MCF 10A (cell line): ENCODE measurements at regions of chr15 and their contacts with region 1.

Region 1: DNA sequence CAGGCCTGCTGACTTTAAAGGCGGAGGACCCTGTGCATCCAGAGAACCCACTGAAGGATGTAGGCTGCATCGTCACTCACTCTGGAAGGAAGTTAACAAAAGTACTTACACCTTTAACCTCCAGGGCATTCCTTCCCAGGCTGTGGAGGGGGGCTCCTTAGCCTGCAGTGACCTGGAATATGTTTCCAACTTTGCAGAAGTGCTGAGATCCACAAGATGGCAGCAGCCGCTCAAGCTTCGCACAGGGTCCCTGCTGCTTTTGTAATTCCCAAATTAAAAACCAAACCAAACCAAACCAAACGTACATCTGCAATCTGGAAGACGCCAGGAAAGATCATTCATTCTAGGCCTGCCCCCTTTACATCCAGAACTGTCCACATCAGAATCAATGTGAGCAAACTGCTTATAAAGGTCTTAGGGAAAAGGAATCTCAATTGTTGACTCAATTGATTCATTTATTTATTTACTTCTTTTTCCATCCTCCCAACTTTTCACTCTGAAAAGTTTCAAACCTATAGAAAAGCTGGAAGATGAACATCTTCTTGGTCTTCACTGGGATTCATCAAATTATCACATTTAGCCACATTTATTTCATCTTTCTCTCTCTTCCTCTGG is 70.5 kb upstream of the KLHL25 start:
- DNase-seq: peak; percentile 46
- H3K4me3 Mint-ChIP-seq: no peak overlapping the region
- H3K27ac Mint-ChIP-seq: no peak overlapping the region
- H3K4me1 Mint-ChIP-seq: no peaks in the 10 kb centered on the region
- H3K27me3 Mint-ChIP-seq: peaks cover 41% of the 10 kb centered on the region
- CTCF ChIP-seq: peak; percentile 81

Region 2: GRCh38 chr15:85515212-85515611 is 350.0 kb before region 1 on chr15:
- CTCF ChIA-PET with region 1: no interaction called
- POLR2A ChIA-PET with region 1: no interaction called
- intact Hi-C with region 1: no loop called
- DNase-seq: no peak
- H3K4me3 Mint-ChIP-seq: no peak overlapping the region
- H3K27ac Mint-ChIP-seq: no peak overlapping the region
- H3K4me1 Mint-ChIP-seq: peaks cover 28% of the 10 kb centered on the region
- H3K27me3 Mint-ChIP-seq: no peaks in the 10 kb centered on the region
- CTCF ChIP-seq: no peak

Region 3: DNA sequence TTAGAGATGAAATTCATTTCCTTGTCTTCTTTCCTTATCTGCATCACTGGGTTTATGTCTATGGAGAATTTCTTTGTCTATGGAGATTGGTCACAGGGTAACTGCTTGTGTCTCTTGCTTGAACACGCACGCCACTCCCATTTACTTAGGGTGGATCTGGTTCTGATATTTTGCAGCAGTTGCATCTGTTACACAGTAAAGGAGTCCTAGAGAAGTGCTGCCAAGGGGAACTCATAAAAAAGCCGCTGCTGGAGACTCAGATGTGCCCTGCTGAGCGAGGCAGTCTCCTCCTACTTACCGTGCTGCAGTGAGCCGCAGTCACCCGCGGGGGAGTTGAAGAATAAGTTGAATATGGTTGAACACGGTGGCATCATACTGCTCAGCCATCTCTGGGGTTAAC is 34.8 kb after region 1 on chr15:
- CTCF ChIA-PET with region 1: no interaction called
- POLR2A ChIA-PET with region 1: no interaction called
- intact Hi-C with region 1: no loop called
- DNase-seq: no peak
- H3K4me3 Mint-ChIP-seq: no peak overlapping the region
- H3K27ac Mint-ChIP-seq: no peak overlapping the region
- H3K4me1 Mint-ChIP-seq: no peaks in the 10 kb centered on the region
- H3K27me3 Mint-ChIP-seq: peaks cover 71% of the 10 kb centered on the region
- CTCF ChIP-seq: no peak

Region 4: DNA sequence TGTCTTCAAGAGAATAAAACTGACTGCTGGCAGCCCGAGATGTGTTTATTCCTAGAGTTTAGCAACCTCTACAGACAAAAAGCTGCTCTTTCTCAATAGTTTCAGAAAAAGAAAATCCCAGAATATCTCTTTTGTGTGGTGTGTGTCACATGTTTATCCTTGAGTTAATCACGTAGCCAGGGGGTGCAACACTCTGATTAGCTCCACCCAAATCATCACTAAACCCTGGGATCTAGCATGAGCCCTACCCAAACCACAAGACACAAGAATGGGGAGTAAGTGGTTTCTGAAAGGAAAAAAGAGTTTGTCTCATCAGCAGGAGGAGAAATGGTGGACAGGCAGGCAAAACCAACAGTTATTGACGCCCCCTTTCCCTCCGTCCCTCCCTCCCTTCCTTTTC is 136.0 kb after region 1 on chr15:
- CTCF ChIA-PET with region 1: interaction called, 13 read pairs
- POLR2A ChIA-PET with region 1: no interaction called
- intact Hi-C with region 1: loop called (anchors 1 kb)
- DNase-seq: peak; percentile 48
- H3K4me3 Mint-ChIP-seq: no peak overlapping the region
- H3K27ac Mint-ChIP-seq: no peak overlapping the region
- H3K4me1 Mint-ChIP-seq: no peaks in the 10 kb centered on the region
- H3K27me3 Mint-ChIP-seq: peaks cover 24% of the 10 kb centered on the region
- CTCF ChIP-seq: no peak

Region 5: GRCh38 chr15:86743283-86743903 is 878.2 kb after region 1 on chr15:
- CTCF ChIA-PET with region 1: interaction called, 5 read pairs
- POLR2A ChIA-PET with region 1: no interaction called
- intact Hi-C with region 1: loop called (anchors 2 kb)
- DNase-seq: peak; percentile 55
- H3K4me3 Mint-ChIP-seq: no peak overlapping the region
- H3K27ac Mint-ChIP-seq: no peak overlapping the region
- H3K4me1 Mint-ChIP-seq: no peaks in the 10 kb centered on the region
- H3K27me3 Mint-ChIP-seq: no peaks in the 10 kb centered on the region
- CTCF ChIP-seq: peak; percentile 90

Region 6: GRCh38 chr15:86756692-86757091 is 891.5 kb after region 1 on chr15:
- CTCF ChIA-PET with region 1: interaction called, 6 read pairs
- POLR2A ChIA-PET with region 1: no interaction called
- intact Hi-C with region 1: loop called (anchors 2 kb)
- DNase-seq: no peak
- H3K4me3 Mint-ChIP-seq: no peak overlapping the region
- H3K27ac Mint-ChIP-seq: no peak overlapping the region
- H3K4me1 Mint-ChIP-seq: no peaks in the 10 kb centered on the region
- H3K27me3 Mint-ChIP-seq: no peaks in the 10 kb centered on the region
- CTCF ChIP-seq: peak; percentile 23

Region 7: GRCh38 chr15:87033056-87033455 is 1167.9 kb after region 1 on chr15:
- CTCF ChIA-PET with region 1: no interaction called
- POLR2A ChIA-PET with region 1: interaction called, 3 read pairs
- intact Hi-C with region 1: loop called (anchors 10 kb)
- DNase-seq: peak; percentile 12
- H3K4me3 Mint-ChIP-seq: no peak overlapping the region
- H3K27ac Mint-ChIP-seq: peak overlapping the region; percentile 64
- H3K4me1 Mint-ChIP-seq: peaks cover 20% of the 10 kb centered on the region
- H3K27me3 Mint-ChIP-seq: no peaks in the 10 kb centered on the region
- CTCF ChIP-seq: no peak